Natural killer cell (primary cell): ENCODE measurements at regions of chr1 and their contacts with region 1.

Region 1: GRCh38 chr1:212455803-212456528 is 23.2 kb downstream of the NENF start:
- DNase-seq: peak; percentile 80 to 88
- ATAC-seq: peak; percentile 77 to 90 (median 89)
- H3K4me3 ChIP-seq: no peak overlapping the region
- H3K4me3 Mint-ChIP-seq: no peak overlapping the region
- H3K27ac ChIP-seq: no peak overlapping the region
- H3K27ac Mint-ChIP-seq: no peak overlapping the region
- H3K4me1 ChIP-seq: peaks cover 3% of the 10 kb centered on the region
- H3K4me1 Mint-ChIP-seq: peaks cover 0 to 12% of the 10 kb centered on the region in 2 donors
- H3K27me3 ChIP-seq: no peaks in the 10 kb centered on the region
- H3K27me3 Mint-ChIP-seq: no peaks in the 10 kb centered on the region
- CTCF ChIP-seq: peak; percentile 95

Region 2: GRCh38 chr1:212012034-212012740 is 443.8 kb before region 1 on chr1:
- intact Hi-C with region 1: loop called (anchors 2 kb)
- DNase-seq: peak; percentile 39 to 82
- ATAC-seq: peak; percentile 93 to 100 (median 100)
- H3K4me3 ChIP-seq: no peak overlapping the region
- H3K4me3 Mint-ChIP-seq: no peak overlapping the region
- H3K27ac ChIP-seq: no peak overlapping the region
- H3K27ac Mint-ChIP-seq: peak overlapping the region in 1 of 2 donors; percentile 59
- H3K4me1 ChIP-seq: no peaks in the 10 kb centered on the region
- H3K4me1 Mint-ChIP-seq: peaks cover 0 to 6% of the 10 kb centered on the region in 2 donors
- H3K27me3 ChIP-seq: no peaks in the 10 kb centered on the region
- H3K27me3 Mint-ChIP-seq: no peaks in the 10 kb centered on the region
- CTCF ChIP-seq: peak; percentile 84

Region 3: GRCh38 chr1:212062832-212063438 is 393.0 kb before region 1 on chr1:
- intact Hi-C with region 1: loop called (anchors 2 kb)
- DNase-seq: peak in 1 of 2 donors; percentile 62
- ATAC-seq: peak in 2 of 3 donors; percentile 60 to 67
- H3K4me3 ChIP-seq: no peak overlapping the region
- H3K4me3 Mint-ChIP-seq: no peak overlapping the region
- H3K27ac ChIP-seq: no peak overlapping the region
- H3K27ac Mint-ChIP-seq: no peak overlapping the region
- H3K4me1 ChIP-seq: no peaks in the 10 kb centered on the region
- H3K4me1 Mint-ChIP-seq: no peaks in the 10 kb centered on the region
- H3K27me3 ChIP-seq: no peaks in the 10 kb centered on the region
- H3K27me3 Mint-ChIP-seq: no peaks in the 10 kb centered on the region
- CTCF ChIP-seq: peak; percentile 90

Region 4: GRCh38 chr1:212760126-212760823 is 304.3 kb after region 1 on chr1:
- intact Hi-C with region 1: no loop called
- DNase-seq: peak; percentile 23 to 72
- ATAC-seq: peak; percentile 57 to 71 (median 58)
- H3K4me3 ChIP-seq: no peak overlapping the region
- H3K4me3 Mint-ChIP-seq: no peak overlapping the region
- H3K27ac ChIP-seq: no peak overlapping the region
- H3K27ac Mint-ChIP-seq: no peak overlapping the region
- H3K4me1 ChIP-seq: no peaks in the 10 kb centered on the region
- H3K4me1 Mint-ChIP-seq: peaks cover 18 to 34% of the 10 kb centered on the region in 2 donors
- H3K27me3 ChIP-seq: no peaks in the 10 kb centered on the region
- H3K27me3 Mint-ChIP-seq: no peaks in the 10 kb centered on the region
- CTCF ChIP-seq: peak; percentile 37

Region 5: DNA sequence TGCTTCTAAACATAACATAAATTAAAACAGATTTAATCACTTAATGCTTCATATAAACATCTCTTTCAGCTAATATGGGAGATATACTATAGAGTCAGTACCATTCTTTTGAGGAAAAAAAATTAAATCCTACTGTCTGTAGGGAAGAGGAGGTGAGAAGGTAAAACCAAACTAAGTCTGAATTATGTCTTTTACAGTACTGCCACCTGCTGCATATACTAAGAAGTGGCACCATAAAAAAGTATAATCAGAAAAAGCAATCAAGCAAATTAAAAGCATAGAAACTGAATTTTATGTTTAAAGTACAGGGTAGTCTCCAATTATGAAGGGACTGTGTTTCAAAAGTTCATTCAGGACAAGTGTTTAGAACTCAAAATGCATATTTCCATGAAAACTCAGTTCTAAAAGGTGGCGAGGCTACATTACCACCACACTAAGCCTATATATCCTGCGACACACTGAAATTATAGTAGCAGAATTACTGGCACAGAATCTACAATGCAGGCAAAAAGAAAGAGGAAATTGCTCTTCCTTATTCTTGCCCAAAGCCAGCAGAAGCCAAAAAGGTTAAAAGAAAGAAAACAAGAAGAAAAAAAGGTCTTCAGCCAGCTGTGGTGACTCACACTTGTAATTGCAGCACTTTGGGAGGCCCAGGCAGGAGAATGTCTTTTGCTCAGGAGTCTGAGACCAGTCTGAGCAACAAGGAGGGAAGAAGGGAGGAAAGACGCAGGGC is 326.6 kb after region 1 on chr1:
- intact Hi-C with region 1: loop called (anchors 5 kb)
- DNase-seq: peak in 1 of 2 donors; percentile 60
- ATAC-seq: peak; percentile 49 to 73 (median 60)
- H3K4me3 ChIP-seq: no peak overlapping the region
- H3K4me3 Mint-ChIP-seq: no peak overlapping the region
- H3K27ac ChIP-seq: no peak overlapping the region
- H3K27ac Mint-ChIP-seq: peak overlapping the region in 1 of 2 donors; percentile 10
- H3K4me1 ChIP-seq: no peaks in the 10 kb centered on the region
- H3K4me1 Mint-ChIP-seq: peaks cover 5 to 11% of the 10 kb centered on the region in 2 donors
- H3K27me3 ChIP-seq: no peaks in the 10 kb centered on the region
- H3K27me3 Mint-ChIP-seq: no peaks in the 10 kb centered on the region
- CTCF ChIP-seq: peak; percentile 73